ENCODE measurements at regions of chr1 and their contacts with region 1.

Region 1: DNA sequence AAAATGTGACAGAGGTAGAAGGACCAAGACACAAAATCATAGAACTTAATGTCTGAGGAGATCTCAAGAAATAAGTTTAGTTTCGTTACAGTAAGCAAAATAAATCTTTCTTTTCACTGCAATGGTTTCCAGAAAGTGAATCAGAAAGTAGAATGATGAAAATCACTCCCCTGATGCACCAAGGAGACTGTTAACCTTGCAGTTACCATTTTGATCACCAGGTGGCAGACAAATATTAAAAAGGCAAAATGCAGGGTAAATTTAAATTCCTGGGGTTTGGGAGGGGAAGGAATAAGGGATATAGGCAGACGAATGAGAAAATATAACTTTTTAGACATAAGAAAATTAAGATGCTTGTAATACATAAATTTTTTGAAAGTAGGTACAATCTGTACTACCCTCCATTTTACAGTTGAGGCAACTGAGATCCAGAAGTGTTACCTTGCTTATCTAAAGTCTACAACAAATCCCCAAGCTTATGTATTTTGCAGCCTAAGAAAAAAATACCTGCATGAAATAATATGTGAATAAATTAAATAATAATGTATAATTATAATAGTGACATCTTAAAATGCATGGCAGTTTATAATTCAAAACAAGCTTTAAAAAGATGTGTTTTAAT is 253.2 kb downstream of the CRB1 start:
- DNase-seq: peak in 4 of 5 donors; percentile 15 to 34 (median 28)
- H3K4me3 ChIP-seq: no peak overlapping the region
- H3K4me3 Mint-ChIP-seq: no peak overlapping the region
- H3K27ac ChIP-seq: no peak overlapping the region
- H3K27ac Mint-ChIP-seq: no peak overlapping the region
- H3K4me1 ChIP-seq: no peaks in the 10 kb centered on the region
- H3K4me1 Mint-ChIP-seq: peaks cover 0 to 2% (median under 1%) of the 10 kb centered on the region in 4 donors
- H3K27me3 ChIP-seq: no peaks in the 10 kb centered on the region
- H3K27me3 Mint-ChIP-seq: no peaks in the 10 kb centered on the region

Region 2: DNA sequence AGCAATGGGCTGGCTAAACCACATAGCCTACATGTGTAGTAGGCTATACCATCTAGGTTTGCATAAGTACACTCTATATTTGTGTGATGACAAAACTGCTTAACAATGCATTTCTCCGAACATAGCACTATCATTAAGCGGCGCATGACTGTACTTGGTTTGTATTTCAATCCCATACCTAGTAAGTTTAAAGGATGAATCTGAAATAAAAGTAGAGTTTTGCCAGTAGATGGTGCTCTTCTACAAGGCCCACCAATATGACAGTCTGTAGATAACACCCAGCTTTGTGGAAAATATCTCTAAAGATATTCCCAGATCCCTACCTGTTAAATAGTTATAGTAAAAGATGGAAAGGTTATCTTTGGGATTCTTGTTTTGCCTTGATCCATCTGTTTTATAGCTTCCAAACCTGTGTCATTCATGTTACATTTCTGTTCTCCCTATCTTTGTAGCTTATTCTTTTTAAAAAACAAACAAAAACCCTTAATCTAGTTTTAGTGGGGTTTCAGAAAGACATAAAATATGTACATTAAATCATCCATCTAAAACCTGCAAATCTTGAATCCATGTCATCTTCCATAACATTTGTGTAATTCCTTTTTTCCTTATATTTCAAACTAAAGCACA is 340.9 kb before region 1 on chr1:
- CTCF ChIA-PET with region 1: interaction called, 3 read pairs
- POLR2A ChIA-PET with region 1: no interaction called
- intact Hi-C with region 1: loop called (anchors 10 kb)
- DNase-seq: peak in 4 of 5 donors; percentile 26 to 36 (median 32)
- H3K4me3 ChIP-seq: no peak overlapping the region
- H3K4me3 Mint-ChIP-seq: no peak overlapping the region
- H3K27ac ChIP-seq: no peak overlapping the region
- H3K27ac Mint-ChIP-seq: no peak overlapping the region
- H3K4me1 ChIP-seq: no peaks in the 10 kb centered on the region
- H3K4me1 Mint-ChIP-seq: peaks cover 0 to 8% (median 5%) of the 10 kb centered on the region in 4 donors
- H3K27me3 ChIP-seq: no peaks in the 10 kb centered on the region
- H3K27me3 Mint-ChIP-seq: no peaks in the 10 kb centered on the region

Region 3: GRCh38 chr1:197399755-197400527 is 121.3 kb before region 1 on chr1:
- CTCF ChIA-PET with region 1: no interaction called
- POLR2A ChIA-PET with region 1: no interaction called
- intact Hi-C with region 1: loop called (anchors 5 kb)
- DNase-seq: peak; percentile 36 to 47 (median 41)
- H3K4me3 ChIP-seq: no peak overlapping the region
- H3K4me3 Mint-ChIP-seq: peak overlapping the region in 7 of 8 donors; percentile 6 to 67 (median 41)
- H3K27ac ChIP-seq: no peak overlapping the region
- H3K27ac Mint-ChIP-seq: no peak overlapping the region
- H3K4me1 ChIP-seq: no peaks in the 10 kb centered on the region
- H3K4me1 Mint-ChIP-seq: peaks cover 0 to 6% (median 2%) of the 10 kb centered on the region in 4 donors
- H3K27me3 ChIP-seq: no peaks in the 10 kb centered on the region
- H3K27me3 Mint-ChIP-seq: peaks cover 4 to 11% of the 10 kb centered on the region in 2 donors

Region 4: GRCh38 chr1:198465201-198466144 is 944.2 kb after region 1 on chr1:
- CTCF ChIA-PET with region 1: interaction called, 6 read pairs
- POLR2A ChIA-PET with region 1: no interaction called
- intact Hi-C with region 1: loop called (anchors 1 kb)
- DNase-seq: peak in 4 of 5 donors; percentile 30 to 36 (median 36)
- H3K4me3 ChIP-seq: no peak overlapping the region
- H3K4me3 Mint-ChIP-seq: no peak overlapping the region
- H3K27ac ChIP-seq: no peak overlapping the region
- H3K27ac Mint-ChIP-seq: no peak overlapping the region
- H3K4me1 ChIP-seq: no peaks in the 10 kb centered on the region
- H3K4me1 Mint-ChIP-seq: peaks cover 0 to 1% (median 0%) of the 10 kb centered on the region in 4 donors
- H3K27me3 ChIP-seq: no peaks in the 10 kb centered on the region
- H3K27me3 Mint-ChIP-seq: peaks cover 0 to under 1% of the 10 kb centered on the region in 2 donors

Measured in CD4-positive, alpha-beta memory T cell (primary cell).